Testis (tissue), 5 donors: ENCODE measurements at regions of chr12 and their contacts with region 1.

Region 1: DNA sequence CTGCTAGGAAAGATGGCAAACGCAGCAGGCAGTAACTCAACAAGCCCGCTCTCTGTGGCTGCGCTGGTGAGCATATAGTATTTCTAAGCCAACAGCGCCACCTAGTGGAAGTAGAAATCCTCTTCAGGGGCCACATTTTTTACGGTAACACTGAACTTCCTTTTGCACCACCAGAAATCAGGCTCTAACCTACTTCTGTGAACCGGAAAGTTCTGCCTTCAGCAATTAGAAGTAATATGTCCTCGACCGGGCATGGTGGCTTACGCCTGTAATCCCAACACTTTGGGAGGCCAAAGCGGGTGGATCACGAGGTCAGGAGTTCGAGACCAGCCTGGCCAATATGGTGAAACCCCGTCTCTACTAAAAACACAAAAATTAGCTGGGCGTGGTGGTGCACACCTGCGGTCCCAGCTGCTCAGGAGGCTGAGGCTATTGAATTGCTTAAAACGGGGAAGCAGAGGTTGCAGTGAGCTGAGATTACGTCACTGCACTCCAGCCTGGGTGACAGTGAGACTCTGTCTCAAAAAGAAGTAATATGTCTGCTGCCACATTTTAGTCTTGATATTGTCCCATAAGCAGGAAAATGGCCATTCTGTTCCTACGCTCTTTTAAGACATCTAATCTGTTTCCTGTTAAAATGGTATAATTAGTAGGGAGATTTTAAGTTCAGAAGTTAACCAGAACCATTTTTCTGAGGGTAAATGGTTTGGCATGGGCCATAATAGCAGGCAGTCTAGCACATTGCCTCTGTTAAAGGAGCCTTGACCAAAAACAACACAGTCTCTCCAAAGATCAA is 26.8 kb downstream of the APOBEC1 start:
- DNase-seq: peak; percentile 92
- H3K4me3 ChIP-seq: peak overlapping the region; percentile 36 to 57
- H3K27ac ChIP-seq: peak overlapping the region; percentile 28 to 59
- H3K4me1 ChIP-seq: no peaks in the 10 kb centered on the region
- H3K27me3 ChIP-seq: no peaks in the 10 kb centered on the region
- CTCF ChIP-seq: peak; percentile 97 to 98 (median 98)
- POLR2A ChIP-seq: no peak

Region 2: GRCh38 chr12:7219599-7220243 is 419.2 kb before region 1 on chr12:
- intact Hi-C with region 1: loop called (anchors 5 kb)
- DNase-seq: peak; percentile 89
- H3K4me3 ChIP-seq: no peak overlapping the region
- H3K27ac ChIP-seq: no peak overlapping the region
- H3K4me1 ChIP-seq: no peaks in the 10 kb centered on the region
- H3K27me3 ChIP-seq: no peaks in the 10 kb centered on the region
- CTCF ChIP-seq: peak; percentile 58 to 83 (median 82)
- POLR2A ChIP-seq: no peak

Region 3: GRCh38 chr12:7693793-7694192 is 54.8 kb after region 1 on chr12:
- intact Hi-C with region 1: no loop called
- DNase-seq: no peak
- H3K4me3 ChIP-seq: no peak overlapping the region
- H3K27ac ChIP-seq: no peak overlapping the region
- H3K4me1 ChIP-seq: no peaks in the 10 kb centered on the region
- H3K27me3 ChIP-seq: no peaks in the 10 kb centered on the region
- CTCF ChIP-seq: no peak
- POLR2A ChIP-seq: no peak